ENCODE measurements at regions of chr1 and their contacts with region 1.

Region 1: DNA sequence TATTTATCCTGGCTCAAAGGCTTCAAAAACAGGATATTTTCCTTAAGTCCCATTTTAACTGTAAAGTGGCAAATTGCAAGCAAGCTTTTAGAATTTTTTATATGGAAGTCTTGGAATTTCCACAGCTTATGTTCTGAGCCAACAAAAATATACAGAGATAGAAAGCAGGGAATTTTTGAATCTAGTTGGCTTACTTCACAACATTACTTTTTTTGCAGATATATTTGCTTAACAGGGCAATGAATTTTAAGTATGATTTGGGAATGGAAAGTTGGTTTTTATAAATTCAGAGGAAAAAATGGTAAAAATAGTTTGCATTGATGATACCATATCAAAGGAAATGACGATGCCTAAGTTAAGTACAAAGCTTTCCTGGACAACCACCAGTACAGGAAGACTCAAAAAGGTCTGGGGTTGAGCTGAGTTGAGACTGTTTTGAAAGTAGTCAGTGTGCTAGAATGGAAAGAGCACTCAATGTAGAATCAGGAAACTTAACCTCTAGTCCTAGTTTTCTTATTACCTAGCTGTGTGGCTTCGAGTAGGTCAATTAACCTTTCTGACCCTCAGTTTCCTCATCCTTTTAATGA is 11.0 kb upstream of the VCAM1 start:
- DNase-seq: no peak
- H3K4me3 ChIP-seq: no peak overlapping the region
- H3K27ac ChIP-seq: no peak overlapping the region
- H3K4me1 ChIP-seq: no peaks in the 10 kb centered on the region
- H3K27me3 ChIP-seq: no peaks in the 10 kb centered on the region
- CTCF ChIP-seq: no peak
- POLR2A ChIP-seq: no peak

Region 2: DNA sequence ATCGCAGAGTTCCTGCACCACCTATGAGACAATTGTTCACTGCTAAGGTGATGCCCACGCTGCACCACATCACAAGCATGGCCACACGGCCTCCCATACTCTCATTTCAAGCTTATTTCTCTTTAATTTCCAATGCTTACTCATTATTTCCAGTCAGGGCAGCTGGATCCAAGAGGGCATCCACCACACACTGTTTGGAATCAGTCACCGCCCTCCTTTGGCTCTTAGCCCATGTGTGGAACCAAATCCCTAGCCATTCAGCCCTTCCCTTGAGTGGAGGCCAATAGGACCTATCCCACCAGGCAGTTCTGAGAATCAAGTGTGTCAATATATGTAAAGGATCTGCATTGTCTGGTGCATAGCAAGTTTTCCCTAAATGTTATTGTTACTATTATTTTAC is 1089.0 kb before region 1 on chr1:
- intact Hi-C with region 1: loop called (anchors 10 kb)
- DNase-seq: no peak
- H3K4me3 ChIP-seq: no peak overlapping the region
- H3K27ac ChIP-seq: no peak overlapping the region
- H3K4me1 ChIP-seq: no peaks in the 10 kb centered on the region
- H3K27me3 ChIP-seq: no peaks in the 10 kb centered on the region
- CTCF ChIP-seq: no peak
- POLR2A ChIP-seq: no peak

Region 3: GRCh38 chr1:100584761-100585745 is 123.5 kb before region 1 on chr1:
- intact Hi-C with region 1: no loop called
- DNase-seq: no peak
- H3K4me3 ChIP-seq: no peak overlapping the region
- H3K27ac ChIP-seq: peak overlapping the region in 1 of 2 donors; percentile 36
- H3K4me1 ChIP-seq: no peaks in the 10 kb centered on the region
- H3K27me3 ChIP-seq: no peaks in the 10 kb centered on the region
- CTCF ChIP-seq: no peak
- POLR2A ChIP-seq: no peak

Region 4: GRCh38 chr1:100606438-100606837 is 102.1 kb before region 1 on chr1:
- intact Hi-C with region 1: no loop called
- DNase-seq: no peak
- H3K4me3 ChIP-seq: no peak overlapping the region
- H3K27ac ChIP-seq: no peak overlapping the region
- H3K4me1 ChIP-seq: no peaks in the 10 kb centered on the region
- H3K27me3 ChIP-seq: no peaks in the 10 kb centered on the region
- CTCF ChIP-seq: peak in 1 of 3 donors; percentile 20
- POLR2A ChIP-seq: no peak

Measured in breast epithelium (tissue), 4 donors.